HCT116 (cell line): ENCODE measurements at regions of chr6 and their contacts with region 1.

Region 1: DNA sequence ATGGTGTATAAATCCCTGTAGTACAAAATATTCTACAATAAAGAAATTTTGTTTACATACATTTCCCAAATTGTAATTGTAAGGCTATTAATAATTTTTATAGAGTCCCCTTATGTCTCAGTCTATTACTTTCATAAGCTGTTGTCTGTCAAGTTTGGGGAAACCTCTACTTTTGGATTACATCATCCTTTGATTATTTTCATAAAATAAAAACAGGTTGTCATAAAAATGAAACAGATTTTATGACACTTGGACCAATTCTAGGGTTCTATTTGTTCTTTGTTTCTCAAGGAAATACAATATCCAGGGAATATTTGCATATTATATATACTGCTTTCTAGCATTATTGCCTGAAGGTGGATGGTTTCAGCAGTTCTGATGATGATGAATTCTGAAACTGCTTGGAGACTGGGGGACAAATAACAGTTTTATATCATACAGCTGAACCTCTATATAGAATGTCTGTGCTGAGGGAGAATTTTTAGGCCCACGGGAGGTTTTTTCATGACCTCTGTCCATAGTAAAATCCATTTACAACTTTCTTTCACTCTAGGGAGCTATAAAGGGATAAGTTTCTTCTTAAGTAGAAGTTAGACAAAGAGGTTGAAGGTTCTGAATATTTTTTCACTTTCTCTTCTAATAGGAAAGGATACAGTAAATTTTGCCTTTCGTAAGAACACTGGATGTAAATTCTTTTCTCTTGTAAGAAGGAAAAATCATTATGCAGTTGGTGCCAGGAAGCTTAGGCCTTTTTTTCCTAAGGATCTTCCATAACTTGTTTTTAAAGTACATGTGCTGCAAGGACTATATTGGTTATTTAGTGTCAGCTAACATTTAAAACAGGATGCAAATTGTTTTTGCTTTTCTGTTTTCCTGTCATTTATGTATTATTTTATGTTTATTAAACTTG is 58.0 kb downstream of the CD2AP start:
- DNase-seq: no peak
- ATAC-seq: no peak
- H3K4me3 ChIP-seq: no peak overlapping the region
- H3K27ac ChIP-seq: no peak overlapping the region
- H3K4me1 ChIP-seq: no peaks in the 10 kb centered on the region
- H3K27me3 ChIP-seq: no peaks in the 10 kb centered on the region
- CTCF ChIP-seq: no peak
- POLR2A ChIP-seq: no peak
- RAD21 ChIP-seq: no peak

Region 2: GRCh38 chr6:47509937-47510336 is 25.6 kb before region 1 on chr6:
- CTCF ChIA-PET with region 1: no interaction called
- POLR2A ChIA-PET with region 1: no interaction called
- RAD21 ChIA-PET with region 1: no interaction called
- intact Hi-C with region 1: loop called (anchors 5 kb)
- DNase-seq: no peak
- ATAC-seq: no peak
- H3K4me3 ChIP-seq: no peak overlapping the region
- H3K27ac ChIP-seq: no peak overlapping the region
- H3K4me1 ChIP-seq: no peaks in the 10 kb centered on the region
- H3K27me3 ChIP-seq: no peaks in the 10 kb centered on the region
- CTCF ChIP-seq: no peak
- POLR2A ChIP-seq: no peak
- RAD21 ChIP-seq: no peak

Region 3: GRCh38 chr6:47551670-47552069 is 16.1 kb after region 1 on chr6:
- CTCF ChIA-PET with region 1: no interaction called
- POLR2A ChIA-PET with region 1: no interaction called
- RAD21 ChIA-PET with region 1: no interaction called
- intact Hi-C with region 1: no loop called
- DNase-seq: no peak
- ATAC-seq: no peak
- H3K4me3 ChIP-seq: no peak overlapping the region
- H3K27ac ChIP-seq: no peak overlapping the region
- H3K4me1 ChIP-seq: no peaks in the 10 kb centered on the region
- H3K27me3 ChIP-seq: no peaks in the 10 kb centered on the region
- CTCF ChIP-seq: no peak
- POLR2A ChIP-seq: no peak
- RAD21 ChIP-seq: no peak